CD8-positive, alpha-beta T cell (primary cell): ENCODE measurements at regions of chr1 and their contacts with region 1.

Region 1: DNA sequence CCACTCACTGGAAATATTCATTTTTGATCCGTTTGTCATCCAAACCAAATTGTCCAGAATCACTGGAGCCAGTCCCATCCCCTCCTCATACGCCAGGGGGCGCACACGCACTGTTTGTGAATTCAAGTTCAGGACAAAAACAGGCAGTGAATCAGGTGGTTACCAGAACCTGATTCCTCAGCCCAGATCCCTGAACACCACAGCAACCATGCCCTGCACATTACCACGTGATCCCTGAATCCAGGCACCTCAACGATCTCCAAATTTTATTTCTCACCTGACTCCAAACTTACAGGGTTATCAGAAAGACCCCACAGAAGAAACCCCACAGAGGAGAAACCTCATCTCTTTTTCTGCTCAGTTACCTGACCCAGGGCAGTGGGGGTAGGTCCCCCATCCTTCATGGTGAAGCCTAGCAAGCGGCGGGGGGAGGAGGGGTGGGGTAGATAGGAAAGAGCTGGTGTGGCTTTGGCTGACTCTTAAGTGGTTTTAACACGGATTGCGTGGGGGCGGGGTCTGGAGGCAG is 1.4 kb upstream of the PTPRF start:
- DNase-seq: peak; percentile 60 to 89 (median 80)
- ATAC-seq: peak; percentile 65
- H3K4me3 ChIP-seq: no peak overlapping the region
- H3K4me3 Mint-ChIP-seq: peak overlapping the region; percentile 88
- H3K27ac ChIP-seq: no peak overlapping the region
- H3K27ac Mint-ChIP-seq: no peak overlapping the region
- H3K4me1 ChIP-seq: peaks cover 15% of the 10 kb centered on the region
- H3K4me1 Mint-ChIP-seq: peaks cover 21% of the 10 kb centered on the region
- H3K27me3 ChIP-seq: peaks cover 14% of the 10 kb centered on the region in 2 experiments
- H3K27me3 Mint-ChIP-seq: peaks cover 41% of the 10 kb centered on the region
- CTCF ChIP-seq: peak; percentile 96

Region 2: GRCh38 chr1:43077273-43077672 is 452.0 kb before region 1 on chr1:
- CTCF ChIA-PET with region 1: no interaction called
- POLR2A ChIA-PET with region 1: no interaction called
- intact Hi-C with region 1: no loop called
- DNase-seq: no peak
- ATAC-seq: no peak
- H3K4me3 ChIP-seq: no peak overlapping the region
- H3K4me3 Mint-ChIP-seq: no peak overlapping the region
- H3K27ac ChIP-seq: no peak overlapping the region
- H3K27ac Mint-ChIP-seq: no peak overlapping the region
- H3K4me1 ChIP-seq: no peaks in the 10 kb centered on the region
- H3K4me1 Mint-ChIP-seq: peaks cover 4% of the 10 kb centered on the region
- H3K27me3 ChIP-seq: no peaks in the 10 kb centered on the region
- H3K27me3 Mint-ChIP-seq: peaks cover 3% of the 10 kb centered on the region
- CTCF ChIP-seq: no peak

Region 3: DNA sequence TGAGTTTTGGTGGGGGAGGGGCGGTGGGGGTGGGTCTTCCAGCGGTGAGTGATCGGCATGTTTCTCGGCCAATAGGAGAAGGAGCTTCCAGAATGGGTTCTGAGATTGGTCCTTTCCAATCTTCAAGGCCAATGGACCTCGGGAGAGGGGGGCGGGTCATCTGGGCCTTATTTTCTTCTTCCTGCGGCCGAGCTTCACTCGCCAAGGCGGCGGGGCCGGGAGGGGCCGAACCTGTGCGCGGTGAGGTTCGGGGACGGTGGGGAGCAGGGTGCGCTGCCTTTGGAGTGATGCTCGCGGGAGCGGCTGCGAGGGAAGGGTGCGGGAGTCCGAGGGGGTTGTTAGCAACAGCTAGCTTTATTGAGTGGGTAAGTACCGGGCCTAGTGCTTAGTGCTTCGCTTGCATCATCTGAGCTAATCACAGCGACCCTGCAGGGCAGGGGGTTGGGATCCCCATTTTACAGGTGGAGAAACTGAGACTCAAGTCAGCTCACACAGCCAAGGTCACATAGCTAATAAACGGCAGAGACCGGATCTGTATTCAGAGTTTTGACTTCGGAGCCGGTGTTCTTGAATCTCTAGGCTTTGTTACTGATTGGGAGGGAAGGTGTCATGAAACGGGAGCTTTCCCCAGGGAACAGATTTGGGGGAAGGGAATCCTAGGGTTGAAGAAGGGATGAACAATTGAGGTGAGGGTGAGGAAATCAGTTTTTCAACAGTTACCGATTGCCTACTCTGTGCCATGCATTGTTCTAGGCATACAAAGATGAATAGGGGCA is 121.2 kb after region 1 on chr1:
- CTCF ChIA-PET with region 1: no interaction called
- POLR2A ChIA-PET with region 1: interaction called, 4 read pairs
- intact Hi-C with region 1: loop called in 1 of 2 experiments (anchors 5 kb)
- DNase-seq: peak in 8 of 9 experiments; percentile 74 to 97 (median 89)
- ATAC-seq: peak; percentile 71
- H3K4me3 ChIP-seq: peak overlapping the region; percentile 87 to 92
- H3K4me3 Mint-ChIP-seq: peak overlapping the region; percentile 100
- H3K27ac ChIP-seq: peak overlapping the region; percentile 49 to 86
- H3K27ac Mint-ChIP-seq: peak overlapping the region; percentile 97
- H3K4me1 ChIP-seq: peaks cover 17% of the 10 kb centered on the region
- H3K4me1 Mint-ChIP-seq: peaks cover 41% of the 10 kb centered on the region
- H3K27me3 ChIP-seq: no peaks in the 10 kb centered on the region
- H3K27me3 Mint-ChIP-seq: no peaks in the 10 kb centered on the region
- CTCF ChIP-seq: no peak

Region 4: DNA sequence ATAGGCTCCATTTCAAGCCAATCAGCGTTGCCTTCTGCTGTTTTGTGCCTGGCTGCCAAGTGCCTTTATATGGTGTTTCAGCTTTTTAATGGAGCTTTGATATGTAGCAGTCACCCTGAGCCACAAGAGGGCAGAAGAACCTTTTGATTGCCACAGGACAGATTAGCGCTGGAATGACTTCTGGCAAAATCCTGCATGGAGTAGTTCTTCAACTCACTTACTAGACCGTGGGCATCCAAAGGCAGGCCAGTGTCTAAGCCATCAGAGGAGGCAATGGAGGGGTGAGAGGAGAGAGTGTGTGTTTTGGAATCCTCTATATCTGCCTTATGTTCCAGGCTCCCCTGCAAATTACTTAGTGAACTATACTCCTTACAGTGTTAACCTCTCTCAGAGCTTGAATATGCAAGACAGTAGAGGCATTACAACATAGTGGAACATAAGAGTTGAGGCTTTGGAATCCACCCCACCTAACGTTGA is 234.3 kb after region 1 on chr1:
- CTCF ChIA-PET with region 1: interaction called, 5 read pairs
- POLR2A ChIA-PET with region 1: no interaction called
- intact Hi-C with region 1: loop called in 1 of 2 experiments (anchors 2 kb)
- DNase-seq: peak in 8 of 9 experiments; percentile 3 to 72 (median 41)
- ATAC-seq: peak; percentile 81
- H3K4me3 ChIP-seq: no peak overlapping the region
- H3K4me3 Mint-ChIP-seq: no peak overlapping the region
- H3K27ac ChIP-seq: no peak overlapping the region
- H3K27ac Mint-ChIP-seq: no peak overlapping the region
- H3K4me1 ChIP-seq: no peaks in the 10 kb centered on the region
- H3K4me1 Mint-ChIP-seq: peaks cover 4% of the 10 kb centered on the region
- H3K27me3 ChIP-seq: no peaks in the 10 kb centered on the region
- H3K27me3 Mint-ChIP-seq: no peaks in the 10 kb centered on the region
- CTCF ChIP-seq: peak; percentile 75

Region 5: DNA sequence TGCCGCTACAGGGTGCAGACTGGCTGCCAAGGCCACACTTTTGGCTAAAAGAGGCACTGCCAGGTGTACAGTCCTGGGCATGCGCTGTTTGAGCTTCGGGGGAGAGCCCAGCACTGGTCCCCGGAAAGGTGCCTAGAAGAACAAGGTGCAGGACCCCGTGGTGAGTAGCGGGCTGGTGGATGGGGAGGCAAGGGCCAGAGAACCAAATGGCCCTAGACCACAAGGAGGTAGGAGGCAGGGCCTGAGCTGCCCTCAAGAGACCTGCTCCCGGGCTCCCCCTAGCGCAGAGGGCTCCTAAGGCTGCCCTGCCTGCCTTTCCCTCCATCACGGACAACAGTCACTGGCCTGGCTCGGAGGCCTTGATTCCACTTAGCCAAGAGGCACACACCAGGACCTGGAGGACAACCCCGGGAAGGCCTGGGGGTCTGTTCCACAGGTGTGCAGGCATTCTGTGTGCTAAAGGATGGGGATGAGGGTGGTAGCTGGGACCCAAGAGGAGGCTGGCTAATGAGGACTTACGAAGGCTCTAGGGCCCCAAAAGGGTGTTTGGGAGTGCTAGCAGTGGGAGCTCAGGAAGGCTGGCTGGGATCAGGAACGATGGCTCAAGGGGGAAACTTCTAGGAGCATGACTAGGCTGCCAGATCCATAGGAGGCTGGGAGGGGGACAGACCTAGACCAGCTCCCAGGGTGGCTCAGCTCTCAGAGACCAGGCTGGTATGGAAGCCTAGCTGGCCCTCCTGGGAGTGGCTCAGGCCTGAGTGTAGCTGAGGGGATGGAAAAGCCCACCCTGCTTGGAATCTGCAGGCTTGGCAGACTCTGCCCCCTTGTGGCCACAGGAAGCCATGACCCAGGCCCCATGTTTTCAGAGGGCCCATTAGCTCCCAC is 405.1 kb after region 1 on chr1:
- CTCF ChIA-PET with region 1: interaction called, 30 read pairs
- POLR2A ChIA-PET with region 1: no interaction called
- intact Hi-C with region 1: loop called in 1 of 2 experiments (anchors 1 kb)
- DNase-seq: peak; percentile 24 to 68 (median 50)
- ATAC-seq: peak; percentile 69
- H3K4me3 ChIP-seq: no peak overlapping the region
- H3K4me3 Mint-ChIP-seq: no peak overlapping the region
- H3K27ac ChIP-seq: no peak overlapping the region
- H3K27ac Mint-ChIP-seq: no peak overlapping the region
- H3K4me1 ChIP-seq: peaks cover 14% of the 10 kb centered on the region
- H3K4me1 Mint-ChIP-seq: peaks cover 15% of the 10 kb centered on the region
- H3K27me3 ChIP-seq: peaks cover 23 to 27% of the 10 kb centered on the region in 2 experiments
- H3K27me3 Mint-ChIP-seq: peaks cover 29% of the 10 kb centered on the region
- CTCF ChIP-seq: peak; percentile 65

Region 6: DNA sequence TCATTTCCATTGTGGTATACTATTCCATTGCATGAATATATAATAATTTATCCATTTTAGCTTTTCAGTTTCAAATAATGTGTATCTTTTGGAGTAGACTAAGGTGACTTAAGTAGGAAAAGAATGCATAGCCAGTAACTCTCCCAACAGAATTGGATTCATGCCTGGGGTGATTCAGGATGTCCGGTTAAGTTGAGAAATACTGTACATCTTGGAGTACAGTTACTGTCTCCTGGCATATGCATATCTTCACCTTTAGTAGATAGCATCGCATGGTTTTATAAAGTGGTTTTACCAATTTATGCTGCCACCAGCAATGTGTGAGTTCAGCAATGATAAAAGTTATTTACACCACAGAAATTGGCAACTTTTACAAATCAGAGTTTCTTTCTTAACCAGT is 520.6 kb after region 1 on chr1:
- CTCF ChIA-PET with region 1: interaction called, 16 read pairs
- POLR2A ChIA-PET with region 1: no interaction called
- intact Hi-C with region 1: loop called in 1 of 2 experiments (anchors 1 kb)
- DNase-seq: no peak
- ATAC-seq: no peak
- H3K4me3 ChIP-seq: no peak overlapping the region
- H3K4me3 Mint-ChIP-seq: no peak overlapping the region
- H3K27ac ChIP-seq: no peak overlapping the region
- H3K27ac Mint-ChIP-seq: no peak overlapping the region
- H3K4me1 ChIP-seq: no peaks in the 10 kb centered on the region
- H3K4me1 Mint-ChIP-seq: no peaks in the 10 kb centered on the region
- H3K27me3 ChIP-seq: no peaks in the 10 kb centered on the region
- H3K27me3 Mint-ChIP-seq: peaks cover 15% of the 10 kb centered on the region
- CTCF ChIP-seq: no peak

Region 7: GRCh38 chr1:44594871-44595746 is 1065.8 kb after region 1 on chr1:
- CTCF ChIA-PET with region 1: no interaction called
- POLR2A ChIA-PET with region 1: no interaction called
- intact Hi-C with region 1: loop called in 1 of 2 experiments (anchors 5 kb)
- DNase-seq: peak; percentile 50 to 85 (median 77)
- ATAC-seq: peak; percentile 81
- H3K4me3 ChIP-seq: no peak overlapping the region
- H3K4me3 Mint-ChIP-seq: no peak overlapping the region
- H3K27ac ChIP-seq: no peak overlapping the region
- H3K27ac Mint-ChIP-seq: no peak overlapping the region
- H3K4me1 ChIP-seq: no peaks in the 10 kb centered on the region
- H3K4me1 Mint-ChIP-seq: no peaks in the 10 kb centered on the region
- H3K27me3 ChIP-seq: no peaks in the 10 kb centered on the region
- H3K27me3 Mint-ChIP-seq: peaks cover 8% of the 10 kb centered on the region
- CTCF ChIP-seq: peak; percentile 85